A549 (cell line): ENCODE measurements at regions of chr2 and their contacts with region 1.

Region 1: GRCh38 chr2:24971536-24972314 is at the start of gene DNAJC27:
- DNase-seq: peak; percentile 99
- ATAC-seq: peak; percentile 97
- H3K4me3 ChIP-seq: peak within 1 kb of the TSS; percentile 94
- H3K27ac ChIP-seq: peak within 1 kb of the TSS; percentile 93 to 98
- H3K4me1 ChIP-seq: peaks cover 11% of the 10 kb centered on the region; the same call in 2 of the 3 replicates
- CTCF ChIP-seq: no peak
- EP300 ChIP-seq: no peak
- POLR2A ChIP-seq: peak; percentile 93
- RAD21 ChIP-seq: no peak
- polyA plus RNA-seq, gene DNAJC27: 5.2 and 7.8 TPM in 2 replicates

Region 2: GRCh38 chr2:24984912-24985311 is 13.2 kb after region 1 on chr2:
- CTCF ChIA-PET with region 1: interaction called, 35 read pairs
- POLR2A ChIA-PET with region 1: no interaction called
- DNase-seq: no peak
- ATAC-seq: no peak; a peak in 1 of 6 replicates
- H3K4me3 ChIP-seq: no peak overlapping the region
- H3K27ac ChIP-seq: no peak overlapping the region
- H3K4me1 ChIP-seq: no peaks in the 10 kb centered on the region
- CTCF ChIP-seq: no peak
- EP300 ChIP-seq: no peak
- POLR2A ChIP-seq: no peak
- RAD21 ChIP-seq: no peak

Region 3: DNA sequence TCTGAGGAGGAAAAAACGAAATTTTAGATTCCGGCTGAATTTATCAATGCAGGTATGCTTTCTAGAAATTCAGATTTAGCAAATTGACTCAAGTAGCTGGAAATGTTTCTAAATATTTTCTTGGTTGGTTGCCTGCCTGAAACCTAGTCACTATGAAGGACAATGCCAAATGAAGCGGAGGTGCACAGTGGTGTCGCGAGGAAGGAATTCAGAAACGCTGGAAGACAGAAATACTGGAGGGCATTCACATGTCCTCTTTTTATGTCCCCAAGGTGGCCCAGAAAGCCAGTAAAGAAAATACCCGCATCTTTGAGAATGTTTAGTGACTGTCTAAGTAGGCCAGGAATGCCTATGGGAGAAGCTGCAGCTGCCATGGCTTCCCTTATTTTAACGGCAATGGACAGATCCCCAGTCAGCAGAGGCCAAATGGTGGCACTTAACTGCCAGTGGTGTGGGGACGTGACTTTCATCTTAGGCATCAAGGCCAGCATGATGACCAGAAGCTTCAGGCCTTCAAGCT is 54.3 kb after region 1 on chr2:
- CTCF ChIA-PET with region 1: interaction called, 13 read pairs
- POLR2A ChIA-PET with region 1: no interaction called
- DNase-seq: no peak
- ATAC-seq: no peak
- H3K4me3 ChIP-seq: no peak overlapping the region
- H3K27ac ChIP-seq: no peak overlapping the region
- H3K4me1 ChIP-seq: no peaks in the 10 kb centered on the region
- CTCF ChIP-seq: no peak
- EP300 ChIP-seq: no peak
- POLR2A ChIP-seq: no peak
- RAD21 ChIP-seq: no peak

Region 4: GRCh38 chr2:25071966-25072365 is 100.2 kb after region 1 on chr2:
- CTCF ChIA-PET with region 1: interaction called, 65 read pairs
- POLR2A ChIA-PET with region 1: no interaction called
- DNase-seq: no peak
- ATAC-seq: no peak
- H3K4me3 ChIP-seq: no peak overlapping the region
- H3K27ac ChIP-seq: no peak overlapping the region
- H3K4me1 ChIP-seq: peaks cover 12% of the 10 kb centered on the region; the same call in 1 of the 3 replicates
- CTCF ChIP-seq: no peak
- EP300 ChIP-seq: no peak
- POLR2A ChIP-seq: no peak
- RAD21 ChIP-seq: no peak

Region 5: GRCh38 chr2:25115902-25116301 is 144.2 kb after region 1 on chr2:
- CTCF ChIA-PET with region 1: interaction called, 34 read pairs
- POLR2A ChIA-PET with region 1: no interaction called
- DNase-seq: no peak
- ATAC-seq: no peak
- H3K4me3 ChIP-seq: no peak overlapping the region
- H3K27ac ChIP-seq: no peak overlapping the region
- H3K4me1 ChIP-seq: 0 out of 3 replicates have a peak, but pooled peaks cover 4% of the 10 kb centered on the region
- CTCF ChIP-seq: no peak
- EP300 ChIP-seq: no peak
- POLR2A ChIP-seq: no peak
- RAD21 ChIP-seq: no peak

Region 6: DNA sequence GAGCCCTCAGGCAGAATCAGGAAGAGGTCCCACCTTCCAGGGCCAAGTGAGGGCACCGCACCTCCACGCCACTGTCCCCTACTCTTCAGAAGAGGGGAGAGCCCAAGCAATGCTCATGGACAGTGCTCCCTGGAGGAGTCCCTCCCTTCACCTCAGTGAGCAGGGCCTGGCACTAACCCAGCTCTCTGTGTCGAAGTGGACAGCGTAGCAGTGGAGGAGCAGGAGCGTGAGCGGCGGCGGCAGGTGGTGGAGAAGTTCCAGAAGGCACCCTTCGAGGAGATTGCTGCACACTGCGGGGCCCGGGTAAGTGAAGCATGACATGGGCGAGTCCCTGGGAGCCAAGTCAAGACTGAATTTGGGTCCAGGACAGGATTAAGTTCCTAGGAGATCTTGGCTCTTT is 180.0 kb after region 1 on chr2:
- CTCF ChIA-PET with region 1: interaction called, 11 read pairs
- POLR2A ChIA-PET with region 1: no interaction called
- DNase-seq: no peak
- ATAC-seq: 0 out of 6 replicates have a peak, but pooled peaks of 1 of the 2 experiments have one; percentile 14
- H3K4me3 ChIP-seq: no peak overlapping the region
- H3K27ac ChIP-seq: no peak overlapping the region
- H3K4me1 ChIP-seq: no peaks in the 10 kb centered on the region
- CTCF ChIP-seq: no peak
- EP300 ChIP-seq: no peak
- POLR2A ChIP-seq: no peak
- RAD21 ChIP-seq: no peak